Activated CD4-positive, alpha-beta memory T cell treated with anti-CD3 and anti-CD28 coated beads, Interleukin-2, amount 10 ng/mL, durations not matched to agents 7 days and 5 days (primary cell): ENCODE measurements at regions of chr10 and their contacts with region 1.

Region 1: DNA sequence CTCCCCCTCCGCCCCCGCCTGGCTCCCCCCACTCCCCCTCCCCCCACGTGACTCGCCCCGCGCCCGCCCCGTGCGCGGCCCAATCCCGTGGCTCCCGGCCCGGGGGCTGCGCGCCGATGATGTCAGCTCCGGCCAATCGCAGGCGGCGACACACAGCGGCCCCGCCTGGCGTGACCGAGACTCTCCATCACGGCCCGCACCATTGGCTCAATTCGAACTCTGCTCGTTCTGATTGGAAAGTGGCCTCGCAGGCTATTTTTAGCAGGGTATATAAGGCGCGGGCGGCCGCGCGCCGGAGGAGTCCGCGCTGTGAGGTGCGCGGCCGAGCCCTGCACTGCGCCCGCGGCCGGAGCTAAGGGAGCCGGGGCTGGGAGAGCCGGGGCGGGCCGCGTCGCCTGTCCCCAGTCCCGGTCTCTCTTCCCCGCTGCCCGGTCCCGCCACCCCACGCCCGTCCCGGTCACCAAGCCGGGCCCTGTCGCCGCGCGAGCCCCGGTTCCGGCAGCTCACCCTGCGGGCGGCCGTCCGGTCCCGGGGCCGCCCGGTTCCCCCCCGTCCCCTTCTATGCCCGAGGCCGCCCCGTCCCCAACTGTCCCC is 345 bp upstream of the KLF6 start:
- DNase-seq: peak; percentile 100
- H3K4me3 Mint-ChIP-seq: peak overlapping the region; percentile 97
- H3K27ac Mint-ChIP-seq: peak overlapping the region; percentile 98
- H3K4me1 Mint-ChIP-seq: peaks cover 25% of the 10 kb centered on the region
- H3K27me3 Mint-ChIP-seq: peaks cover 3% of the 10 kb centered on the region

Region 2: GRCh38 chr10:3172446-3173170 is 612.7 kb before region 1 on chr10 and contains the start of gene PITRM1:
- CTCF ChIA-PET with region 1: no interaction called
- POLR2A ChIA-PET with region 1: interaction called, 14 read pairs
- DNase-seq: peak; percentile 99
- H3K4me3 Mint-ChIP-seq: peak within 1 kb of the TSS; percentile 87
- H3K27ac Mint-ChIP-seq: peak within 1 kb of the TSS; percentile 85
- H3K4me1 Mint-ChIP-seq: peaks cover 21% of the 10 kb centered on the region
- H3K27me3 Mint-ChIP-seq: peaks cover 24% of the 10 kb centered on the region
- total RNA-seq, gene PITRM1: 53.7 to 56.7 TPM

Region 3: DNA sequence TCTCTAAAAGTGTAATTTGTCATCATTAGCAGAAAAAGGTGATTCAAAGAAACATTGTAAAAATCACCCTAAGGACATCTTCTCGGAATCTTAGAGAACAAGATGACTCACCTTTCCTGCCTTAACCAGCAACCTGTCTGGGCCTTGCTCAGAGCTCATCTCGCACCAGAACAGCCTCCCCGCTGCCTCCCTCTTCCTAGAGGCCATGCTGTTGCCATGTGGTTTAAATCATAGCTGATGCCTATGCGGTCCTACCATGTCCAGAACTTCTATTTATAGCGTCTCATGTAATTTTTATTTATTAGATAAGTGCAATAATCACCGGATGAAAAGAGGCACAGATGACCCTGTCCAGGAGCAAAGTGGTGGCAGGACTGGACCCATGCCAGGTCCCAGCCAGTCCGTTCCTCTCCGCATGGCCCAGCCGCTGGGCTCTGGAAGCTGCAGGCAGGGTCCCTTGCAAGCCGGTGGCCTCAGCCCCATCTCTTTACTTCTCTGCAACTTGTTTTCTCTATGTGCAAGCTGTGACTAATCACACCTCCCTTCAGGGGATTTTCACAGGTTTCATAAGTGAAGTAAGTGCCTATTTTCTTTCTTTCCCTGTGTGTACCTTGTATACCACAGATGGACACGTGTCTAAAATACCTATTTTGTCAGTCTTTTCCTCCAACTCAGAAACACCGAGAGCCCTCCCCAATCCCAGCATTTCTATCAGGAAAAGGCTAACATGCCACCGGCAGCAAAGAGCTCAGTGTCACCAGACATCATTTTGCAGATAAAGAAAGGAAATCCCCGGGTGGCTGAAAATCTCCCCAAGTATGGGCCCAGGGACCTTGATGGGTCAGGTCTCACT is 27.5 kb before region 1 on chr10:
- CTCF ChIA-PET with region 1: interaction called, 10 read pairs
- POLR2A ChIA-PET with region 1: interaction called, 206 read pairs
- DNase-seq: peak; percentile 80
- H3K4me3 Mint-ChIP-seq: peak overlapping the region; percentile 46
- H3K27ac Mint-ChIP-seq: peak overlapping the region; percentile 97
- H3K4me1 Mint-ChIP-seq: peaks cover 83% of the 10 kb centered on the region
- H3K27me3 Mint-ChIP-seq: no peaks in the 10 kb centered on the region

Region 4: DNA sequence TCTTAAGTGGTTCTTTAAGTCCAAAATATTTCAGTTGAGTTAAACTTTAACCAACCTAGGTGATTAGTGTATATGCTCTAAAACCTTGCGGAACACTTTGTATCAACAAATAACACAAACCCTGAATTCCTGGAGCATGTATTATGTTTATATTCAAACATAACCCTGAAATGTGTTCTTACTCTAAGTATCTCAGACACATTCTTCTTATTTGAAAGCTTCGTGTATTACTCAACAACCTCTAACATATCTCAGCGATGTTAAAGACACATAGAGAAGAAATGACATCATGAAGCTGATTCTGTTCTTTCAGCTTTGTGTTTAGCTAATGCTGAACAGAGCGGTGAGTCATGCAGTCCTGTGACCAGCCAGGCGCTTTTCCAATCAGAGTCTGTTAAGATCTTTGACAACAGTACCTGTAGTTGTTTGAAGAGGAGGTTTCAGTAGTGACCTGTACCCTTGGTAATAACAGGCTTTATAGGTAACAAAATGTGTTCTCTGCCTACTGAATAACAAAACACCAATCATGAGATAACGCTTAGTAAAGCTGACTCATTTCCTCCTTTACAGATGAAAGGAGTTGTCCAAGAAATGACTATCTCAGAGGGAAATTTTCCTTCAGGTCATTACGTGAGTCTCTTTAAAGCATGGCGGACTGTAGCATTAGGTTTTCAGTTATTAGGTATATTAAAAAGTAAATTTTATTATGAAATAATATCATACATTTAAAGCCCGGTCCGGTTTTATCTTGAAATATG is 67.0 kb after region 1 on chr10:
- CTCF ChIA-PET with region 1: no interaction called
- POLR2A ChIA-PET with region 1: interaction called, 90 read pairs
- DNase-seq: peak; percentile 76
- H3K4me3 Mint-ChIP-seq: peak overlapping the region; percentile 15
- H3K27ac Mint-ChIP-seq: peak overlapping the region; percentile 75
- H3K4me1 Mint-ChIP-seq: peaks cover 36% of the 10 kb centered on the region
- H3K27me3 Mint-ChIP-seq: no peaks in the 10 kb centered on the region

Region 5: GRCh38 chr10:3942937-3943489 is 157.7 kb after region 1 on chr10:
- CTCF ChIA-PET with region 1: interaction called, 3 read pairs
- POLR2A ChIA-PET with region 1: interaction called, 146 read pairs
- DNase-seq: no peak
- H3K4me3 Mint-ChIP-seq: peak overlapping the region; percentile 58
- H3K27ac Mint-ChIP-seq: peak overlapping the region; percentile 80
- H3K4me1 Mint-ChIP-seq: peaks cover 58% of the 10 kb centered on the region
- H3K27me3 Mint-ChIP-seq: no peaks in the 10 kb centered on the region

Region 6: DNA sequence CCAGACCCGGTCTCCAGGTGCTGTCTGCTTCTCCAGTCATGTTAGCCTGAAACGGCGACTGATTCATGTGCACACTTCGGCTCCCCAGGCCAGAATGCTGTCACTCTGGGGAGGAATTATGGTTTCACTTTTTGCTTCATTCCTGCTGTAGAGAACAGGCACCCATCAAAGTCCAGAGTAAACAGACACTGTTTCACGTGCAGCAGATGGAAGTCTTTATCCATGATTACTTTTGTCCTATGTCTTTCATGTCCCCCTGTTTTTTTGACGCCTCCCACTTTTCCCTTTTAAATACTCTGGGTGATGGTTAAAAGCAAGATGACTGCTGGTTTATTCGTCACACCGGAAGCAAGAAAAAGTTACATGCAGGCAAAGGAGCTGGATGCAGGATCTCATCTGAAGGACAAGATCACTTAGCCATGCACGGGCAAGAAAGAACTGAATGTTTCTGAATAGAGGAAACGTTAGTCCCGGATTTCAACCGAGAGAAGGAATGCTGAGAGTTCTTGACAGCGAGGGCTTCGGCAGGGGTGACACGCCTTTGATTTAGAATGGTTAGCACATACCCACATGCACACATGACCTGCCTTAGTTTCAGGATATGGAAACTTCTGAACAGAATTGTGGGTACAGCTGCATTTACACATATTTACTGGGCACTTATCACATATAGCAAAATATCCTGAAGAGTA is 249.7 kb after region 1 on chr10:
- CTCF ChIA-PET with region 1: no interaction called
- POLR2A ChIA-PET with region 1: interaction called, 10 read pairs
- DNase-seq: peak; percentile 25
- H3K4me3 Mint-ChIP-seq: peak overlapping the region; percentile 45
- H3K27ac Mint-ChIP-seq: peak overlapping the region; percentile 53
- H3K4me1 Mint-ChIP-seq: peaks cover 36% of the 10 kb centered on the region
- H3K27me3 Mint-ChIP-seq: no peaks in the 10 kb centered on the region